Right ventricle myocardium inferior (tissue), 1 donor: ENCODE measurements at regions of chr10 and their contacts with region 1.

Region 1: DNA sequence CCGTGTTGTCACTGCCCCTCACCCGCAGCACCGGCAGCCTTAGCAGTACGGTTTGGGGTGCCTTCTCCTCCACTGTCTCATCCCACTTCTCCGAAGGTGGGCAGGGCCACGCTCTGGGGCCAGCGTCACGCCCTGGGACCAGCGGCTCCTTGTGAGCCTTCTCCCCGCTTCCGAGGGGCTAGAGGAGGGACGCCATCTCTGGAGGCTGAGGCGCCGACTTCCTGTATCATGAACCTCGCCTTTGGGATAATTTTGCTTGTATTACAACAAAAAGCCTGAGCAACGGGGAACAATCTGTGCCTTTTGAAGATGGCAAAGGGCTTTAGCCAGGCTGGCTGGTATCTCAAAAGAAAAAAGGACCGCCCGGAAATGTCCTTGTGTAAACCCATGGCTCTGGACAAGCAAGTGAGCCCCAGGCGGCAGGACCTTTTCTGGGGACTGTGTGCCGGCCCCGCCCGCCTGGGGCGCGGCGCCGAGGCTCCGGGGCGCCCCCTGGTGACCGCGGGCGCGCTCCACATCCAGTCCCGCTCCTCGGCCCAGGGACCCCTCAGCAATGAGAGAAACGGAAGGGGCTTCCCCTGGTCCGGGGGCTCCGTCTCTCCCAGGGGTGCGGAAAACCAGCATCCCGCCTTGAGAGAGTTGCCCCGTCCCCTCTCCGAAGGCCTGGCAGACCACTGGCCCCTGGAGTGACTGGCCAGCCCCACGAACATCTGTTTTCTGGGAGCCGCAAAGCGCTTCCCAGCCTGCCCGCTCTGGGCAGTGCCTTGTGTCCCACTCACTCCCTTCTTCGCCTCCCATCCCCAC is 3.8 kb downstream of the DEPP1 start:
- DNase-seq: peak; percentile 90
- ATAC-seq: peak; percentile 77

Region 2: GRCh38 chr10:43407576-43408330 is 1567.1 kb before region 1 on chr10:
- intact Hi-C with region 1: no loop called
- DNase-seq: peak; percentile 96
- ATAC-seq: peak; percentile 78

Region 3: DNA sequence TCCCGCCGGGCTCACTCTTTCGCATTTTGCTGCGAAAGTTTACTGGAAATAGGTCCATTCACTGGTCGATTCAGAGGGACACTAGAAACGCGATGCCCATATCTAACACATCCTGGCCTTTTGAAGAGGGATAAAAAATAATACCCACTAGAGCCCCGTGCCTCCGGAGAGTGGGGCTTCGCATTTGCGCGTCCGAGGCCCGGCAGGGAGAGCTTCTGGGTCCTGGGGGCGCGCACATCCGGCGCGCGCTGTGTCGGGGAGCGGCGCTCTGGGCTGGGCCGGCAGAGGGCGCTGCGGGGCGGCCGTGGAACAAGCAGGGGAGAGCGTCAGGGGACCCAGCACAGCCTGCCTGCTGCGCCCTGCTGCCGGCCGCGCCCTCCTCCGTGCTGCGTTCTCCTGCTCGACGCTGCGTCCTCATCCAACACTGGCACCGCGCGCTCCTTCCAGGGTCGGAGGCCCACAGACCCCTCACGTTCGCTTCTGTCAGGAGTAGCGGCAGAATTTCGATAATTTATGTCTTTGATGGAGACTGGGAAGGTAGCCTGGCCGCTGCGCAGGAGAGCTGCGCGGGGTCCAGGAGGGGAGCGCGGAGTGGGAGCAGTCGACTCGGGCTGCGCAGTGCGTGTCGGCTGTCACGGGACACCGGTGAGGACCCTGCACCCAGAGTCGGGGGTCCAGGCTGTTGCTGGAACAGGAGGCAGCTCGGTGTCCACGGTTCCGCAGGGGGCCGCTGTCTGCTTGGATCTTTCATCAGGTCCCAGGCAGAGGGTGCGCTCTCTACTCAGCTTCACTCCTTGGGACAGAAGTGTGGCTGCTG is 1284.7 kb before region 1 on chr10:
- intact Hi-C with region 1: loop called (anchors 10 kb)
- DNase-seq: peak; percentile 92
- ATAC-seq: peak; percentile 98

Region 4: DNA sequence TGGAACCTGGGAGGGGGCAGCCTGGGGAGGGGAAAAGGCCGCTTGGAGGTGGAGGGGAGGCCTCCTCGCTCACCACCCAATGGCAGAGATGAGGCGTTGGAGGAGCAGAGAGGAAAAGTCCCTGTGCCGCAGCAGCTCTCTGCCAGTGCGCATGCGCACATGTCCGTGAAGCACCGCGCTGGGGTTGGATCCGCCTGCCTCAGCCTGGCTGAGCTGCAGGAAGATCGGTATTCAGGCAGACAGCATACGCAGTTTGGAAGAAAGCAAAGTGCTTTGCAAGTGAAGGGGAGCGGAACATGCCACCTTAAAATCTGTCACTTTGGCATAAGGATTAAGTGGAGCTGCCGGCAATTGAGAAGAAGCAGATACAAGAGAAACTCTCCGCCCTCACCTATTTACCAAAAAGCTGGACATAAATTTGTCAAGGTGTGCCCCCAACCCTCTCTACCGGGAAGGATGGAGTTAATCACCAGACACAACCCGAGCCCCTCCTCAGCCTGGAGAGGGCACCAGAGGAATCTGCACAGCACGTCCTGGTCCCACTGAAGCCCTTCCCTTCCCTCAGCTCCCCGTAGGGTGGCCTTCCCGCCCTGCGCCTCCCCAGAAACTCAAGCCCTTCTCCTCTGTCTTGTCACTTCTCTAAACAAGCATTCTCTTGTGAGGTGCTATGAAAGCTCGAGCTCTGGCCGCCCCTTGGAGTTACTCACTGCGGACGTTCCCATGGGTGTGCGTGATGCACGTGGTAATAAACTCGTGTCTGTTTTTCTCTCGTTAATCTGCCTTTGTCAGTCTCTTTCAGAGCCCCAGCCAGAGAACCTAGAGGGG is 95.9 kb before region 1 on chr10:
- intact Hi-C with region 1: loop called (anchors 10 kb)
- DNase-seq: peak; percentile 94
- ATAC-seq: peak; percentile 92

Region 5: GRCh38 chr10:44932517-44933450 is 42.0 kb before region 1 on chr10:
- intact Hi-C with region 1: loop called (anchors 1 kb)
- DNase-seq: peak; percentile 96
- ATAC-seq: peak; percentile 88

Region 6: DNA sequence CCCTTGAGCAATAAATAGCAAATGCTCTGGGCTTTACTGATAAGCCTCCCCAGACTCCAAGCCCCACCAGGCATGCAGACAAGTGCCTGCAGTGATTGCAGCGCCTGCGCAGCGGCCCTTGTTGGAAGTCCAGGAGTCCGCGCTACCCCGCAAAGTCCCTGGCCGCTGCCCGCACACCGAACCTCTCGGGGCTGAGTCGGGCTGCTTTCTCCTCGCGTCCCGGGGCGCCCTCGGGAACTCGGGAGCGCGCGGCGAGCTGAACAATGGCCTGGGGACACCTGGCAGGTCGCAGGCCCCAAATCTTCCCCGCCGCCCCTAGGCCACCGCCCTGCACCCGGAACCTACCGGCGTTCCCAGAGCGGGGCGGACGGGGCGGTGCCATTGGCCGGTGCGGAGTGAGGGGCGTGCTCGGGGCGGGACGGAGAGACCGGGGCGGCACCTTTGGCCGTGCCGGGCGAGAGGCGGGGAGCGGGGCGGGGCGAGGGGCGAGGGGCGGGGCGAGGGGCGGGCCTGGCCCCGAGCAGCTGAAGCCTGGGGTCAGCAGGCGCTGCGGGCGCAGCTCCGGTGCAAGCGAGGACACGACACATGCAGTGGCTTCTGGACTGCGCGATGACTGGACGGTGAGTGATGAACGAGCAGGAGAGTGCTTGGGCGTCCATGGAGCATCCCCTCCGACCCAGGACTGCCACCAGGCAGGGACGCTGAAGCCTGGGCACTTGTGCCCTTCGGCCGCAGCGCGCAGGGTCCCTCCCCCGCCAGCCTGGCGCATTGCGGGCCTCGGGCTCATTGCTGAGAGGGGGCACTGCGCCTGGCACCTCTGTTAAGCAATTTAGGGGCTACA is 15.4 kb before region 1 on chr10 and contains the start of gene RASSF4:
- intact Hi-C with region 1: loop called (anchors 2 kb)
- DNase-seq: peak; percentile 97
- ATAC-seq: peak; percentile 91
- total RNA-seq, gene RASSF4: 91.5 TPM

Region 7: GRCh38 chr10:44995914-44996636 is 21.2 kb after region 1 on chr10:
- intact Hi-C with region 1: loop called (anchors 1 kb)
- DNase-seq: peak; percentile 72
- ATAC-seq: peak; percentile 61

Region 8: DNA sequence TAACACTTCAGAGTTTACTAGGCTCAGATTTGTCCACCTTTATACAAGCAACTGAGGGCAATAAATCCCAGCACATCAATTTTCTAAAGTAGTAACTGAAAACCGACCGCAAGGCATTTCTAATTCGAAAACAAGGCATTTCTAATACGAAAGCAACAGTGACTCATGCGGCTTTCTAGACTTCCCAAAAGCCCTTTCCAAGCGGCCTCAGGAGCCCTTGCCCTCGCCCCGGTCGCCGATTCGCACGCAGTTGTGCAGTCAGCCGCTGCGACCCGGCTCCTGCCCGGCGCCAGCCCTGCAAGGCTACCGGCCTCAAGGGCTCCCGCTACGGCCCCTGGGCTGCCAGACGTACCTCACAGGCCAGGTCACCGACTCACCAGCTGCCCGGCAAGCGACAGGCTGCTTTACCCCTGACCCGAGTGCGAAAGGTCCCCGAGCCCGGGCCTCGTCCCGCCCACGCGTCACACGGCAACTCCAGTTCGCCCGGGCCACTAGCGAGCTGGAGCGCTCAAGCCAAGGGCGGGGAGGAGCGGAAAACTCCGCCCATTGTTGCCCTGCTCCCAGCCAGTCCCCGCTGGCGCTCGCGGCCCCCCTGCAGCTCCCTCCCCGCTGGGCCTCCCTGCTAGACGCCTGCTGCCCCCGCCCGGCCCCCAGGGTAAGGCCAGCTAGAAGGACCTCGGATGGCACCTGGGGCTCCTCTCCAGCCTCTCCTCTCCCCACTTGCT is 1048.3 kb after region 1 on chr10:
- intact Hi-C with region 1: loop called (anchors 10 kb)
- DNase-seq: peak; percentile 96
- ATAC-seq: peak; percentile 96